Mammary epithelial cell (primary cell): ENCODE measurements at regions of chr19 and their contacts with region 1.

Region 1: GRCh38 chr19:55173714-55174409 is 6.2 kb downstream of the SYT5 start:
- DNase-seq: peak; percentile 30
- H3K4me3 ChIP-seq: peak overlapping the region; percentile 56 to 69 (median 59)
- H3K27ac ChIP-seq: no peak overlapping the region
- H3K4me1 ChIP-seq: peaks cover 15% of the 10 kb centered on the region
- H3K27me3 ChIP-seq: no peaks in the 10 kb centered on the region
- CTCF ChIP-seq: peak in 1 of 2 donors; percentile 33

Region 2: GRCh38 chr19:55080968-55081772 is 92.7 kb before region 1 on chr19:
- CTCF ChIA-PET with region 1: no interaction called
- dilution Hi-C with region 1: loop called (anchors 5 kb)
- in situ Hi-C with region 1: no loop called
- intact Hi-C with region 1: no loop called
- DNase-seq: peak; percentile 51
- H3K4me3 ChIP-seq: peak overlapping the region; percentile 11 to 54 (median 45)
- H3K27ac ChIP-seq: no peak overlapping the region
- H3K4me1 ChIP-seq: peaks cover 21% of the 10 kb centered on the region
- H3K27me3 ChIP-seq: no peaks in the 10 kb centered on the region
- CTCF ChIP-seq: no peak

Region 3: GRCh38 chr19:55133639-55134444 is 40.0 kb before region 1 on chr19:
- CTCF ChIA-PET with region 1: no interaction called
- dilution Hi-C with region 1: no loop called
- in situ Hi-C with region 1: no loop called
- intact Hi-C with region 1: no loop called
- DNase-seq: no peak
- H3K4me3 ChIP-seq: no peak overlapping the region
- H3K27ac ChIP-seq: no peak overlapping the region
- H3K4me1 ChIP-seq: no peaks in the 10 kb centered on the region
- H3K27me3 ChIP-seq: no peaks in the 10 kb centered on the region
- CTCF ChIP-seq: no peak

Region 4: DNA sequence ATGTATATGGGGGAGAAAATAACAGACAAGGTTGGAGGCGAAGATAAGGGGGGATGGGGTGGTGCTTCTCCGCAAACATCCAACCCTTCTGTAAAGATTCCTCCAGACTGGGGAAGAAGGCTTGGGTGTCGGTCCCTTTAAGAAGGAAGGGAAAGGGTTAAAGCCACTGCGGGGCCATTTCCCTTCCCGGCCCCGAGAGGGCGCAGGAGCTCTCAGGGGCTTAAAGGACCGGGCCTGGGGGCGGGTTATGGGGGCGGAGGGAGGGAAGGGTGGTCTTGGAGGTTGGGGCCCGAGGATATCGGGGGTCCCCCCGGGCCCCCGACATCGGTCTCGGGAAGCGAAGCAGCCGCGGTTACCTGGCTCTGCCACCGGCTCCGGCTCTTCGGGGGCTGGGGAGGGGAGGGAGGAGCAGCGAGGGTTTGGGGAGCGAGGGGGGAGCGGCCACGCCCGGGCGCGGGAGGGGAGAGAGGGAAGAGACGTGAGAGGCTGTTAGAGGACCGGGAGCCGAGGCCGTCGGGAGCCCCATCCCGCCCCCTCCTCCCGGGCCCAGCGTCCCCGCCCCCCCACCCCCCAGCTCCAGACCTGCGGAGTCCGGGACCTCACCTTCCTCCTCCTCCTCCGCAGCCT is 27.7 kb before region 1 on chr19:
- CTCF ChIA-PET with region 1: no interaction called
- dilution Hi-C with region 1: no loop called
- in situ Hi-C with region 1: no loop called
- intact Hi-C with region 1: no loop called
- DNase-seq: peak; percentile 29
- H3K4me3 ChIP-seq: peak overlapping the region; percentile 48 to 54 (median 51)
- H3K27ac ChIP-seq: no peak overlapping the region
- H3K4me1 ChIP-seq: peaks cover 5% of the 10 kb centered on the region
- H3K27me3 ChIP-seq: no peaks in the 10 kb centered on the region
- CTCF ChIP-seq: peak; percentile 54 to 84

Region 5: DNA sequence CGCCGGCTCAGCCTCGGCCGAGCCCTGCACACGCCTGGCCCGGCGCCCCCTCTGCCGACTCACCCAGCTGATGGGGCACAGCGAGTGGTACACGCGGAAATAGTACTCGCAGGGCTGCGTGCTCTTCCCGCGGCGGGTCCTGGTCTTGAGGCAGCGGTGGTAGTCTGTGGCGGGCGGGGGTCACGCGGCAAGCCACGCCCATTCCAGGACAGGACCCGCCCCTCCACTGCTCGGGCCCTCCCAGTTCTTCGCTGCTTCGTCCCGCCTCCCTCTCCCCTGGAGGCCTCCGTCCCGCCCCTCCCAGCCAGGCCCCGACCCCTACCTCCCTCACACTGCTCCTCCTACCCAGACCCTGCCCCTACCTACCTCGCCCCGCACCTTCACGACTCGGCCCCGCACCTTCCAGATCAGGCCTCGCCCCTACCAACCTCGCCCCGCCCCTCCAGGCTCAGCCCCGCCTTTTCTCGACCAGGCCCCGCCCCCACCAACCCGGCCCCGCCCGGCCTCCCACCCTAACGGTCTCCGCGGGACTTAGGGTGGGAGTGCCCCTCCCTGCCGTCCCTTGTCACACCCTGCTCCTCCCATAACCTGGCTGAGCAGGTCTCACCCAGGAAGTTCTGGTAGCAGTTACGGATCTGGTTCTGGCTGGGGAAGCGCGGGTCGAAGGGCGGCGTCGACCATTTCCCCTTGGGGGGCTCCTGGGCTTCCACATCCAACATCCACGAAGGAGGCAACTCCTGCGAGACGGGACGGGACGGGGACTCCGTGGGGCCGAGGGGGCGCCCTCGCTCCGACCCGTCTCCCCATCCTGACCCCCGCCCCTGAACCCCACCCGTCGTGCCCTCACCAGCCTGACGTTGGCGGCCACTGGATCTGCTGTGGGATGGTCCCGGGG is 180.2 kb after region 1 on chr19:
- CTCF ChIA-PET with region 1: no interaction called
- dilution Hi-C with region 1: loop called (anchors 5 kb)
- in situ Hi-C with region 1: no loop called
- intact Hi-C with region 1: no loop called
- DNase-seq: peak; percentile 60
- H3K4me3 ChIP-seq: peak overlapping the region; percentile 47 to 59 (median 48)
- H3K27ac ChIP-seq: no peak overlapping the region
- H3K4me1 ChIP-seq: peaks cover 30% of the 10 kb centered on the region
- H3K27me3 ChIP-seq: no peaks in the 10 kb centered on the region
- CTCF ChIP-seq: no peak

Region 6: DNA sequence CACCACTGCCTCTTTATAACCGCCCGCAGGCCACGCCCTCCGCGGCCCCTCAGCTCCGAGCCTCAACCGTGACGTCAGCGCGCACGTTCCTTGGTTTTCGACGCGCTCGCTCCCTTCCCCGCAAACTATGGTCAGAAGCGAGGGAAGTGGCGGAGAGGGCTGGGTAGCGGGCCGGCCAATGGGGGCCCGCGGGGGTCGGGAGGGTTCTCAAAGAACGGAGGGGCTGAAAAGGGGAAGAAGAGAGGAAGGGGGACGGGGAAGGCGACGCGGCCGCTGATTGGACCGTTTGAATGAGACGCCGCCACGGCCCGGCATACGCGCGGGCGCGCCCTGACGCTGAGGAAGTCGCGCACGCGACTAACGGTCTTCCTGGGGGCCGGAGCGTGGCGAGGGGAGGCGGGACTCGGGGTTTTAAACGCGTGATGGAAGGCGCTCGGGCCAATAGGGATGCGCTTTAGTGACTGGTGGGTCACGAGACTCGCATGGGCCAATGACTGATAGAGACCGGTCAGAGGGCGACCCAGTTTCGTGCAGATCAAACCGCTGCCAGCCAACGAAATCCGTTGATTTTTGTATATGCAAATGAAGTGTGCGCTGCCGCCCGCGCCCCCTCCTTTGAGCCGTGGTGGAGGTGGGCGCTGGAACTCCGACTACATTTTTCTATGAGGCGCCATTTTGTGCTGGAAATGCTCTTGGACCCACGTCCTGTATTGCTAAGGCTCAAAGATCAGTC is 234.1 kb after region 1 on chr19:
- CTCF ChIA-PET with region 1: no interaction called
- dilution Hi-C with region 1: loop called (anchors 5 kb)
- in situ Hi-C with region 1: no loop called
- intact Hi-C with region 1: no loop called
- DNase-seq: peak; percentile 98
- H3K4me3 ChIP-seq: peak overlapping the region; percentile 75 to 94 (median 81)
- H3K27ac ChIP-seq: peak overlapping the region; percentile 94
- H3K4me1 ChIP-seq: peaks cover 29% of the 10 kb centered on the region
- H3K27me3 ChIP-seq: no peaks in the 10 kb centered on the region
- CTCF ChIP-seq: no peak

Region 7: DNA sequence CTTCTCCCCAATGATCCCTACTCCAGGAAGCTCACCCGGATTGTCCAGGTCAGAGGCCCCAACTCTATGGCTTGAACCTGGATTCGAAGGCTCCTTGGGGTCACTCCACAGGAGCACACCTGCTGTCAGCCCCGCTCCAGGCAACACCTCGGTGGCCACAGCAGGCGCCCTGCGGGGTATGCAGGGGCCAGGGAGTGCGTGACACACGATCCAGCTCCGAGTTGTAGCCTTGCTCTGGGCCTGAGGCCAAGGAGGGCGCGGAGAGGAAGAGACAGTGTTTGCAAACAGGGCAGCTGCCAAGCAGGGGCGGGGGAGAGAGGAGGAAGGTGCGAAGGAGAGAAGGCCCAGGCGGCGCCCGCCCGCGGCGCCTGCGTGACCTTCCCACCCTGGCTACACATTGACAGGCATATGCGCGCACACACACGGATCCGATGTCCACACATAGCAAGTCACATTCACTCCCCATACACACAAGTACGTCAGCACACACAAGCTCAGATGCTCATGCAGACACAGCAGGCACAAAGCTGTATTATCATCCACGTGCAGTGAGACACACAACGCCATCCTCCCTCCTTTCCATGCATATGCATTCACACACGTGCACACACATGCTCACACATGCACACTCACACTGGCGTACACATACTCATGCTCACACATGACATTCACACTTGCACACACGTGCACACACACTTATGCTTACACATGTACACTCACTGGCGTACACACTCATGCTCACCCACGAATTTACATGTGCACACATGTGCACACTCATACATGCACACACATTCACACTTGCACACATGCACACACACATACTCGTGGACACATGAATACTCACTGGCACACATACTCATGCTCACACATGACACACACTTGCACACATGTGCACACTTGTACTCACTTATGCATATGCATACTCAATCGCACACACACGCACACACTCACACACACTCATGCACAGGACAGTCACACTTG is 352.6 kb after region 1 on chr19:
- CTCF ChIA-PET with region 1: no interaction called
- dilution Hi-C with region 1: loop called (anchors 5 kb)
- in situ Hi-C with region 1: no loop called
- intact Hi-C with region 1: no loop called
- DNase-seq: no peak
- H3K4me3 ChIP-seq: no peak overlapping the region
- H3K27ac ChIP-seq: no peak overlapping the region
- H3K4me1 ChIP-seq: no peaks in the 10 kb centered on the region
- H3K27me3 ChIP-seq: no peaks in the 10 kb centered on the region
- CTCF ChIP-seq: no peak

Region 8: DNA sequence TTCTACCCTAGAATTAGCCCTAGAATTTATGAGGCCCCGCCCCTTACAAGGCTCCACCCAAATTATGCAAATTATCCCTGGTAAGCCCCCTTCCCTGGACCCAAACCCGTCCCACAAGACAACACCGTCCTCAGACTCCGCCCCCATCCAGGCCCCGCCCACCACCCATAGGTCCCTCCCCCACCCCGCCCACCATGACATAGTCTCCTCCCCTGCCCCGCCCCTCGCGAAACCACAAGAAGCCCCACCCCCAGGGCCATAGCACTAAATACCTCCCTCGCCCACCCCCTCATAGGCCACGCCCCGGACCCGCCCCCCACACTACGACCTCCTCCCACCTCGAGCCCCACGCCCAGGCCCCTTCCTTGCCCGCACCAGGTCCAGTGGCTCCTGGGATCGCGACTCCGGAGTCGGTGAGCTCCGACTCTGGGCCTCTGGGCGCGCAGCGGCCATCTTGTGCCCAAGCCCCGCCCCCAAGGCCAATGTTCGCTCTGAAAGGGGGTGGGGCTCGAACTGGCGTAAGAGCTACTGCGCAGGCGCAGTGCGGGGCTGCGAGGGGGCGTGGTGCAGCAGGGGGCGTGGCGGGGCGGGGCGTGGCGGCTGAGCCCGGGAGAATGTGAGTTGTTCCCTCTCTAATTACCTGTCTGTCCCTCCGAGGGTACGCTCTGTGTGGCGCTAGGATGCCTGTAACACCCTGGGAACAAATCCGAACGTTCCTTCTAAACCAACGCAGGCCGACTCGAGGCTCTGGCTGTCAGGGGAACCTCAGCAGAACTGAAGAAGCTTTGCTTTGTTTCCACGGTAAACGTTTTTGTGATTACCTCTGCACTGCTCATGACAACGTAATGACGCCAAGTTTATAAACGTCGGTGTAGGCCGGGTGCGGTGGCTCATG is 450.5 kb after region 1 on chr19 and contains the start of gene ZNF784:
- CTCF ChIA-PET with region 1: no interaction called
- dilution Hi-C with region 1: loop called (anchors 5 kb)
- in situ Hi-C with region 1: no loop called
- intact Hi-C with region 1: no loop called
- DNase-seq: peak; percentile 85
- H3K4me3 ChIP-seq: peak within 1 kb of the TSS; percentile 43 to 76 (median 54)
- H3K27ac ChIP-seq: peak within 1 kb of the TSS; percentile 39
- H3K4me1 ChIP-seq: peaks cover 4% of the 10 kb centered on the region
- H3K27me3 ChIP-seq: no peaks in the 10 kb centered on the region
- CTCF ChIP-seq: no peak
- total RNA-seq, gene ZNF784: 4.2 to 6.1 TPM